Activated B cell treated with CpG ODN at 0.5 μM for 24 hours (primary cell): ENCODE measurements at regions of chr17 and their contacts with region 1.

Region 1: DNA sequence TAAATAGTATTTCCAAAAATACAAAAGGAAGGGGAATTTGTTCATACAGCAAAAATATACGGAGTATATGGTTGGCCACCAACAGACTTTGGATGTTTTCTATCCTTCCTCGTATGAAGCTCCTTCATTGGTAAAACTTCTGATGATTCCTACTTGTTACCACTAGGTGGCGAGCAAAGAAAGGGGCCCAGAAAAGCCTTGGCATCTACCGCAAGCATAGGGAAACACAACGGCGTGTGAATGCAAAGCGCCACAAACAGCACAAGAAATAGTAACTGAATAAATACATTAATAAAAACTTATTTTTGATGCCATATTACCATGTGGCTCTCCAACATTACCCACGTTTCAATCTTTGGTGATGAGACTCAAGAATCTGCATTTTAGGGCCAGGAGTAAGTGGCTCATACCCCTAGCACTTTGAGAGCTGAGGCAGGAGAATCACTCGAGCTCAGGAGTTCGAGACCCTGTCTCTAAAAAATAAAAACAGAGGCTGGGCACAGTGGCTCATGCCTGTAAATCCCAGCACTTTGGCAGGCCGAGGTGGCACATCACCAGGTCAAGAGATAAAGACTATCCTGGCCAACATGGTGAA is 34.5 kb downstream of the YWHAE start:
- DNase-seq: no peak
- ATAC-seq: peak; percentile 45
- H3K4me3 Mint-ChIP-seq: peak overlapping the region; percentile 24
- H3K27ac Mint-ChIP-seq: peak overlapping the region; percentile 56
- H3K4me1 Mint-ChIP-seq: peaks cover 71% of the 10 kb centered on the region
- H3K27me3 Mint-ChIP-seq: no peaks in the 10 kb centered on the region
- CTCF ChIP-seq: no peak

Region 2: GRCh38 chr17:1186923-1187771 is 178.4 kb before region 1 on chr17:
- CTCF ChIA-PET with region 1: no interaction called
- POLR2A ChIA-PET with region 1: no interaction called
- intact Hi-C with region 1: no loop called
- DNase-seq: peak; percentile 73
- ATAC-seq: peak; percentile 79
- H3K4me3 Mint-ChIP-seq: peak overlapping the region; percentile 26
- H3K27ac Mint-ChIP-seq: no peak overlapping the region
- H3K4me1 Mint-ChIP-seq: peaks cover 60% of the 10 kb centered on the region
- H3K27me3 Mint-ChIP-seq: no peaks in the 10 kb centered on the region
- CTCF ChIP-seq: no peak

Region 3: GRCh38 chr17:1331708-1332107 is 33.8 kb before region 1 on chr17:
- CTCF ChIA-PET with region 1: interaction called, 10 read pairs
- POLR2A ChIA-PET with region 1: no interaction called
- intact Hi-C with region 1: no loop called
- DNase-seq: no peak
- ATAC-seq: no peak
- H3K4me3 Mint-ChIP-seq: peak overlapping the region; percentile 8
- H3K27ac Mint-ChIP-seq: no peak overlapping the region
- H3K4me1 Mint-ChIP-seq: peaks cover 12% of the 10 kb centered on the region
- H3K27me3 Mint-ChIP-seq: no peaks in the 10 kb centered on the region
- CTCF ChIP-seq: no peak

Region 4: DNA sequence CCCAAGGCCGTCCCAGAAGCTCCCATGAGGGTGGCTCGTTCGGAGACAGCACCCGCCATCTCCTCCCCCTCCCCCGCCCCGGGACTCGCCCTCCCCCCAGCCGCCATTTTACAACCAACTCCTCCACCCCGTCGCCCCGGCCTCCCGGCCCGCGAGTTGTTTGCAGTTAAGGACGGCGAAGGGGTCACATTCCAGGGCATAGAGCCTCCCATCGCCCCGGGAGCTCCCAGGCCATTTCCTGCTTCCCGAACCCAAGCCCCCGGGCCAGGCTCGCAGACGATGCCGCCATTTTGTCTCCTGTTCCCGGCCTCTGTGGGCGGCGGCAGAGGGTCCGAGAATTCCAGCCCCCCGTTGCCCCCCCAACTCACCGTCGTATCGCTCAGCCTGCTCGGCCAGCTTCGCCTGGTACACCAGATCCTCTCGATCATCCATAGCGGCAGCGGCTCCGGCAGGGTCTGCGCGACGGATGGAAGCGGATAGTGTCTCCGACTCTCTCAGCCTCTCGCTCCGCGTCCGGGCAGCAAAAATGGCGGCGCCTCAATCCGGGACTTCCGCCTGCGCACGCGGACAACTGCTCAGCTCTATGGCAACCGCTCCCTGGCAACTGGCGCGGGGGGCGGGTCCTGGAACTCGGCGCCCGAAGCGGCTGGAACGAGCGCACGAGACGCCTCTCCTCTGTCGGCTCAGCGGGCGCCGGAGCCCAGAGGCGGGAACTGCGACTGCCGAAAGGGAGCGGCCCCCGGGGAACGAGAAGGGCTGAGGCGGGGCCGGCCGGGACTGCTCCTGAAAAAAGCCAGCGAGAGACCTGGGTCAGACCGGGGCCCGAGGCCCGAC is 34.4 kb after region 1 on chr17 and contains the start of gene YWHAE:
- CTCF ChIA-PET with region 1: interaction called, 16 read pairs
- POLR2A ChIA-PET with region 1: interaction called, 17 read pairs
- intact Hi-C with region 1: loop called (anchors 5 kb)
- DNase-seq: peak; percentile 94
- ATAC-seq: peak; percentile 85
- H3K4me3 Mint-ChIP-seq: peak within 1 kb of the TSS; percentile 98
- H3K27ac Mint-ChIP-seq: peak within 1 kb of the TSS; percentile 98
- H3K4me1 Mint-ChIP-seq: peaks cover 44% of the 10 kb centered on the region
- H3K27me3 Mint-ChIP-seq: no peaks in the 10 kb centered on the region
- CTCF ChIP-seq: no peak
- total RNA-seq, gene YWHAE: 253 and 263 TPM in 2 replicates

Region 5: DNA sequence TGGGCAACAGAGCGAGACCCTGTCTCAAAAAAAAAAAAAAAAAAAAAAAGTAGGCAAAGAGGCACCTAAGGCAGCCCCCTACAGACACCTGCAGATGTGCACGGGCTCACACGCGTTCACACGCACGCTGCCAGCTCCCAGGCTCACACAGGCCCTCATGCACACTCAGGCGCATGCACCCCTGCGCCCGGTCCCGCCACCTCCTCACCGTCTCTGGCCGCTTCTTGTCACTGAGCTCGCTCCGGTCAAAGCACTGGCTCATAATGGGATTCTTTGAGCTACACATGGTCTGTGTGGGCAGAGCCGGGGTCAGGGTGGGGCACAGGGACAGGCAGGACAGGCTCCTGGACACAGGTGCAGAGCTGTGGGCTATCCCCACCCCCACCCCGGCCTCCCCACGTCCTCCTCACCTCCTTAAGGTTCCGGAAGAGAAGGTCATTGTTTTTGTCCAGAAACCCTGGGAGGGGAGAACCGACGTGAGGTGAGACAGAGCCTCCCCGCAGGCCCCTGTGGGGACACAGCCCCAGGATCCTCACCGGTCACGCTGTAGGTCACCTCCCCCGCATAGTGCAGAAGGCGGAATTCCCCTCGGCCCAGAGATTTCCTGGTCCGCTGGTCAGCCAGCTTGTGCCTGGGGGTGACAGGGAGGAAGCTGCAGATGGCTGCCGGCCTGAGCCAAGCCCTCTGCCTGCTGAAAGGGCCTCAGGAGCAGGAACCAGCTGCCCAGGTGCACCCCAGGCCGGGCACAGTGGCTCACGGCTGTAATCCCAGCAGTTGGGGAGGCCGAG is 109.1 kb after region 1 on chr17:
- CTCF ChIA-PET with region 1: interaction called, 5 read pairs
- POLR2A ChIA-PET with region 1: no interaction called
- intact Hi-C with region 1: loop called (anchors 5 kb)
- DNase-seq: peak; percentile 58
- ATAC-seq: peak; percentile 64
- H3K4me3 Mint-ChIP-seq: peak overlapping the region; percentile 70
- H3K27ac Mint-ChIP-seq: peak overlapping the region; percentile 79
- H3K4me1 Mint-ChIP-seq: peaks cover 56% of the 10 kb centered on the region
- H3K27me3 Mint-ChIP-seq: no peaks in the 10 kb centered on the region
- CTCF ChIP-seq: no peak

Region 6: GRCh38 chr17:1509290-1509881 is 143.8 kb after region 1 on chr17:
- CTCF ChIA-PET with region 1: interaction called, 133 read pairs
- POLR2A ChIA-PET with region 1: interaction called, 3 read pairs
- intact Hi-C with region 1: no loop called
- DNase-seq: no peak
- ATAC-seq: no peak
- H3K4me3 Mint-ChIP-seq: no peak overlapping the region
- H3K27ac Mint-ChIP-seq: no peak overlapping the region
- H3K4me1 Mint-ChIP-seq: peaks cover 1% of the 10 kb centered on the region
- H3K27me3 Mint-ChIP-seq: no peaks in the 10 kb centered on the region
- CTCF ChIP-seq: no peak

Region 7: GRCh38 chr17:1561400-1562175 is 196.0 kb after region 1 on chr17:
- CTCF ChIA-PET with region 1: interaction called, 14 read pairs
- POLR2A ChIA-PET with region 1: interaction called, 3 read pairs
- intact Hi-C with region 1: loop called (anchors 1 kb)
- DNase-seq: peak; percentile 54
- ATAC-seq: peak; percentile 26
- H3K4me3 Mint-ChIP-seq: peak overlapping the region; percentile 86
- H3K27ac Mint-ChIP-seq: peak overlapping the region; percentile 71
- H3K4me1 Mint-ChIP-seq: peaks cover 52% of the 10 kb centered on the region
- H3K27me3 Mint-ChIP-seq: no peaks in the 10 kb centered on the region
- CTCF ChIP-seq: no peak